Activated CD8-positive, alpha-beta T cell treated with anti-CD3 and anti-CD28 coated beads for 36 hours (primary cell): ENCODE measurements at regions of chr20 and their contacts with region 1.

Region 1: DNA sequence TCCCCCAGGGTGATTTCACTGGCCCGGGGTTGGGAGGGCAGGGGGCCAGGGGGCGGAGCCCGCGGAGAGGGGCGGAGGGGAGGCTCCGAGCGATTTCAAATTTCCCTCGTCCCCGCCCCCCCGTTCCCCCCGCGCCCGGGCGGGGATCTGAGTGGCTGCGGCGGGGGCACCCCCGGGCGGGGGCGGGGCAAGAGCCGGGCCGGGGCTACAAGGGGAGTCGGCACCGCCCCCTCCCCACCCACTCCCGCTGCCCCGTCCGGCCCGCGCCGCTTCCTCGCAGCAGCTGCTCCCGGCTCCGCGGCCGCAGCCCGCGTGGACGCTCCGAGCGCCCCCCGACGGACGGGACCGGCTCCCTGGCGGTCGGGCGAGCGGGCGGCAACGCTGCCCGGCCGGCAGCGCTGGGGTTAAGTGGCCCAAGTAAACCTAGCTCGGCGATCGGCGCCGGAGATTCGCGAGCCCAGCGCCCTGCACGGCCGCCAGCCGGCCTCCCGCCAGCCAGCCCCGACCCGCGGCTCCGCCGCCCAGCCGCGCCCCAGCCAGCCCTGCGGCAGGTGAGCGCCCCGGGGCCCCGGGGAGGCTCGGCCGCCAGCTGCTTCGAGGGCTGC is at the start of gene DNMT3B:
- DNase-seq: peak; percentile 84
- ATAC-seq: peak; percentile 80
- H3K4me3 Mint-ChIP-seq: peak within 1 kb of the TSS; percentile 75
- H3K27ac Mint-ChIP-seq: peak within 1 kb of the TSS; percentile 70
- H3K4me1 Mint-ChIP-seq: peaks cover 8% of the 10 kb centered on the region
- H3K27me3 Mint-ChIP-seq: peaks cover 3% of the 10 kb centered on the region
- CTCF ChIP-seq: peak; percentile 27
- total RNA-seq, gene DNMT3B: 2.9 TPM

Region 2: DNA sequence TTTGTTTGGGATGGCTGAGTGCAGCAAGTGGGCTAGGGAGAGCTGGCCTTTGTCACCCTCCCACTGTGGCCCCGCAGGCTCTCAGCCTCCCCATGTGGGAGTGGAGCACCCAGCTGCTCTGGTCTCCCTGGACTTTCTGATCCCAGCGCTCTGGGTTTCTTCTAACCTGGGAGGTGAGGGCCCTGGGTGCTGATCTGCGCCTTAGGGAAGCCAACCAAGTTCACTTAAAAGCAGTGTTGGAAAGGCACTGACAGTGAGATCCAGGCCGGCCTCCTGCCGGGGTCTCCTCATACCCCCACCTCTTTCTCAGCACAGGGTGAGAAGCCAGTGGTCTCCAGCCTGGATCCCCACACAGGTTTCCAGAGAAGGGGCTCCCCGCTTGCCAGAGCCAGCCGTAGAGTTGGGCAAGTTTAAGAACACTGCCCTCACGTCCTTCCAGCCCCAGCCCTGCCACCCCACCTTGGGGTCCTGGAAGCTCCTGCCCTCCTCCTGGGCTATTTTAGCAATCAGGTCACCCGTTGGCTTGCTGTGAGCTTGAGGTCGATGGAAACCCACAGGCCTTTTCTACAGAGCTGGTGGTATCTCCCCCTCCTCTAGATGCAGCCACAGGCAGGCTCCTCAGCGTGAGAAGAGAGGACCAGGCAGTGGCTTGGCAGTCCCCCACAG is 98.1 kb before region 1 on chr20:
- CTCF ChIA-PET with region 1: no interaction called
- POLR2A ChIA-PET with region 1: no interaction called
- intact Hi-C with region 1: no loop called
- DNase-seq: no peak
- ATAC-seq: no peak
- H3K4me3 Mint-ChIP-seq: no peak overlapping the region
- H3K27ac Mint-ChIP-seq: no peak overlapping the region
- H3K4me1 Mint-ChIP-seq: peaks cover 6% of the 10 kb centered on the region
- H3K27me3 Mint-ChIP-seq: no peaks in the 10 kb centered on the region
- CTCF ChIP-seq: no peak

Region 3: DNA sequence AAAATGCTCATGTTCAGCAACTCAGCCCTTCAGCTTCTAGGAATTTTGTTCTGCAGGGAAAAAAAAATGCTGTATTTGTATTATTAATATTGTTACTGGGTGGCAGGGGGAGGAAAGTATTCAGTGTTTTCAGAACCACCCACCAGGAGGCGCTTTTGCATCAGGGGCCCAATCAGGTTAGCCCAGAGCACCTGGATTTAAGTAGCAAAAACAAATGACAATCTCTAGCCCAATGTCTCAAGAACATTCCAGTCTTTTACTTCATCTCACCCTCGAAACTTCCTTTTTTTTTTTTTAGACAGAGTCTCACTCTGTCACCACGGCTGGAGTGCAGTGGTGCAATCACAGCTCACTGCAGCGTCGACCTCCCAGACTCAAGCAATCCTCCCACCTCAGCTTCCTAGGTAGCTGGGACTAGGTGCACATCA is 87.9 kb before region 1 on chr20:
- CTCF ChIA-PET with region 1: interaction called, 15 read pairs
- POLR2A ChIA-PET with region 1: interaction called, 3 read pairs
- intact Hi-C with region 1: no loop called
- DNase-seq: peak; percentile 87
- ATAC-seq: peak; percentile 37
- H3K4me3 Mint-ChIP-seq: no peak overlapping the region
- H3K27ac Mint-ChIP-seq: peak overlapping the region; percentile 36
- H3K4me1 Mint-ChIP-seq: peaks cover 24% of the 10 kb centered on the region
- H3K27me3 Mint-ChIP-seq: no peaks in the 10 kb centered on the region
- CTCF ChIP-seq: peak; percentile 89

Region 4: DNA sequence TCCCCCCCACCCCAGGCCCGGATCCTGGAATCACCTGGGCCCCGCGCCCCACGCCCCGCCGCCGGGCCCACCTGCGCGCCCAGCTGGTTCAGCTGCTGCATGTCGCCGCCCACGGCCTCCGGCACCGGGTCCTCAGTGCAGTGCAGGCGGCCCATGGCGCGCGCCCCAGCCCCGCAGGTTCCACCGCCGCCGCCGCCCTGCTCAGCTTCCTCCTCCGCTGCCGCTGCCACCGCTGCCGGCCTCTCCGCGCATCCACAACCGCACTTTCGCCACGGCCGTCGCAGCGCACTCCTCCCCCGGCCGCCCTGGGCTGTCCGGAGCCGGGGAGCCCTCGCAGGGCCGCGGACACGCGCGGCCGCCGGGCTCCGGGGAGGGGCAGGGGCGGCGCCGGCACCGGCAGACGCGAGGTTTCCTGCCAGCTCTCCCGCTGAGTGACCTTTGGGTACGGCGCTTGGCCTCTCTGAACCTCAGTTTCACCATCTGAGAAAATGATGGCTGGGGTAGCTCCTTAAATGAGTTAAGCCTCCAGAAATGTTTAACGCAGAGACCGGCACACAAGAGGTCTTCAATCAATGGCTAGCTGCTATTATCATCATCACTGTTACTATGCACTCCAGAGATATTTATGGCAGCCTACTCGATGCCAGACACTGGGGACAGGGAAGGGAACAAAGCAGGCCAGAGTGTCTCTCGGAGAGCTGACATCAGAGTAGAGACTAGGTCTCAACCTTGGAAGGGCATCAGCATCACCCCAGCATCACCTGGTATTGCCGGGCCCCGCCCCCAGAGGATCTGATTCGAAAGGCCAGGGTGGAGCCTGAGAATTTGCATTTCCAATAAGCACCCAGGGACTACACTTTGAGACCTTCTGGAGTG is 18.8 kb before region 1 on chr20 and contains the start of gene COMMD7:
- CTCF ChIA-PET with region 1: interaction called, 4 read pairs
- POLR2A ChIA-PET with region 1: interaction called, 19 read pairs
- intact Hi-C with region 1: no loop called
- DNase-seq: peak; percentile 91
- ATAC-seq: peak; percentile 87
- H3K4me3 Mint-ChIP-seq: peak within 1 kb of the TSS; percentile 94
- H3K27ac Mint-ChIP-seq: peak within 1 kb of the TSS; percentile 94
- H3K4me1 Mint-ChIP-seq: peaks cover 28% of the 10 kb centered on the region
- H3K27me3 Mint-ChIP-seq: no peaks in the 10 kb centered on the region
- CTCF ChIP-seq: no peak
- total RNA-seq, gene COMMD7: 30.7 to 34.0 TPM